HCT116 (cell line): ENCODE measurements at regions of chr11 and their contacts with region 1.

Region 1: GRCh38 chr11:19076744-19077589 is 16.4 kb upstream of the MRGPRX2 start:
- DNase-seq: peak; percentile 31
- ATAC-seq: peak; percentile 82
- H3K4me3 ChIP-seq: no peak overlapping the region
- H3K27ac ChIP-seq: no peak overlapping the region
- H3K4me1 ChIP-seq: peaks cover 6 to 25% of the 10 kb centered on the region in 2 experiments; a peak in 3 of 4 replicates
- H3K27me3 ChIP-seq: no peaks in the 10 kb centered on the region
- CTCF ChIP-seq: peak; percentile 65 to 98 (median 98); a peak in 5 of 6 replicates
- POLR2A ChIP-seq: no peak
- RAD21 ChIP-seq: peak; percentile 76

Region 2: GRCh38 chr11:18994860-18995259 is 82.1 kb before region 1 on chr11:
- CTCF ChIA-PET with region 1: no interaction called
- POLR2A ChIA-PET with region 1: no interaction called
- RAD21 ChIA-PET with region 1: no interaction called
- intact Hi-C with region 1: no loop called
- DNase-seq: no peak
- ATAC-seq: no peak
- H3K4me3 ChIP-seq: no peak overlapping the region
- H3K27ac ChIP-seq: no peak overlapping the region
- H3K4me1 ChIP-seq: no peaks in the 10 kb centered on the region
- H3K27me3 ChIP-seq: peaks cover 8% of the 10 kb centered on the region; the same call in 1 of the 2 replicates
- CTCF ChIP-seq: no peak
- POLR2A ChIP-seq: no peak
- RAD21 ChIP-seq: no peak

Region 3: GRCh38 chr11:19110280-19110679 is 33.3 kb after region 1 on chr11:
- CTCF ChIA-PET with region 1: interaction called, 10 read pairs
- POLR2A ChIA-PET with region 1: no interaction called
- RAD21 ChIA-PET with region 1: no interaction called
- intact Hi-C with region 1: no loop called
- DNase-seq: no peak
- ATAC-seq: no peak
- H3K4me3 ChIP-seq: no peak overlapping the region
- H3K27ac ChIP-seq: no peak overlapping the region
- H3K4me1 ChIP-seq: no peaks in the 10 kb centered on the region
- H3K27me3 ChIP-seq: no peaks in the 10 kb centered on the region
- CTCF ChIP-seq: 0 out of 6 replicates have a peak, but pooled peaks of 1 of the 3 experiments have one; percentile 17
- POLR2A ChIP-seq: no peak
- RAD21 ChIP-seq: peak; percentile 30; the same call in 1 of the 2 replicates

Region 4: GRCh38 chr11:19116971-19117750 is 40.2 kb after region 1 on chr11 and contains the start of gene ZDHHC13:
- CTCF ChIA-PET with region 1: interaction called, 5 read pairs
- POLR2A ChIA-PET with region 1: interaction called, 3 read pairs
- RAD21 ChIA-PET with region 1: no interaction called
- intact Hi-C with region 1: loop called (anchors 2 kb)
- DNase-seq: peak; percentile 80
- ATAC-seq: peak; percentile 97
- H3K4me3 ChIP-seq: peak within 1 kb of the TSS; percentile 82 to 86
- H3K27ac ChIP-seq: peak within 1 kb of the TSS; percentile 59
- H3K4me1 ChIP-seq: peaks cover 5 to 29% of the 10 kb centered on the region in 2 experiments; a peak in 3 of 4 replicates
- H3K27me3 ChIP-seq: no peaks in the 10 kb centered on the region
- CTCF ChIP-seq: peak; percentile 32 to 57 (median 52); a peak in 4 of 6 replicates
- POLR2A ChIP-seq: peak; percentile 24
- RAD21 ChIP-seq: peak; percentile 31; the same call in 1 of the 2 replicates
- total RNA-seq, gene ZDHHC13: 21.8 TPM

Region 5: GRCh38 chr11:19240420-19241259 is 163.7 kb after region 1 on chr11 and contains the start of gene E2F8:
- CTCF ChIA-PET with region 1: interaction called, 3 read pairs
- POLR2A ChIA-PET with region 1: no interaction called
- RAD21 ChIA-PET with region 1: no interaction called
- intact Hi-C with region 1: loop called (anchors 2 kb)
- DNase-seq: peak; percentile 93
- ATAC-seq: peak; percentile 90
- H3K4me3 ChIP-seq: peak within 1 kb of the TSS; percentile 76 to 94
- H3K27ac ChIP-seq: peak within 1 kb of the TSS; percentile 67
- H3K4me1 ChIP-seq: peaks cover 10 to 46% of the 10 kb centered on the region in 2 experiments
- H3K27me3 ChIP-seq: no peaks in the 10 kb centered on the region
- CTCF ChIP-seq: no peak
- POLR2A ChIP-seq: no peak
- RAD21 ChIP-seq: no peak
- total RNA-seq, gene E2F8: 18.4 TPM